Activated CD4-positive, alpha-beta T cell treated with anti-CD3 and anti-CD28 coated beads for 36 hours (primary cell): ENCODE measurements at regions of chr2 and their contacts with region 1.

Region 1: GRCh38 chr2:207166039-207166348 is 246 bp upstream of the KLF7 start:
- DNase-seq: peak; percentile 98
- ATAC-seq: peak; percentile 91
- H3K4me3 Mint-ChIP-seq: peak overlapping the region; percentile 90
- H3K27ac Mint-ChIP-seq: peak overlapping the region; percentile 95
- H3K4me1 Mint-ChIP-seq: peaks cover 44% of the 10 kb centered on the region
- H3K27me3 Mint-ChIP-seq: no peaks in the 10 kb centered on the region

Region 2: DNA sequence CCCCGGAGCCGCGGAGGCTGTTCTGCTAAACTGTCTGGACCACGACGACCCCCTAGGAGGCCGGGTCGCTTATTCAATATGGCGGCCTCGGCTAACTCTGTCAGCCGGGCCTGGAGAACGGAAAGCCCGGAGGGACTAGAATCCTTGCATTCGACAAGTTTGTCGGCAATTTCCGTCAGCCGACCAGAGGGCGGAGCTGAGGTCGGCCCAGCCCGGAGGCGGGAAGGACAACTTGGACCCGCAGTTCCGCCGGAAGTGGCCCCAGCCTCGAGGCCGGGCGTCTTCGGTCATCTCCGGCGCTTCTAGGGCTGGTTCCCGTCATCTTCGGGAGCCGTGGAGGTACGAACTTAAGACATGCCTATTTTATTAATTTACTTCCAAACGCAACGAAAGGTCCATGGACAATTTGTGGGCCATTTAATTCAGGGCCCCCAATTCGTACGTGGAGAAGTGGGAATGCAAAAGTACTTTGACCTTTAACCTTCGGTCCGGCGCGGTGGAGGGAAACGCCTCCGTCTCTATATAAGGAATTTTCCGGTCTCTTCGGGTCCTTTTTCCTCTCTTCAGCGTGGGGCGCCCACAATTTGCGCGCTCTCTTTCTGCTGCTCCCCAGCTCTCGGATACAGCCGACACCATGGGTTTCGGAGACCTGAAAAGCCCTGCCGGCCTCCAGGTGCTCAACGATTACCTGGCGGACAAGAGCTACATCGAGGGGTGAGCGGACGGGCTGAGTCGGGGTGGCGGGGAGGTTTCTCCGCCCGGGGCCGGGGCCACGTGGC is 1006.5 kb before region 1 on chr2 and contains the starts of genes EEF1B2 and NDUFS1:
- CTCF ChIA-PET with region 1: no interaction called
- POLR2A ChIA-PET with region 1: no interaction called
- intact Hi-C with region 1: loop called in 1 of 2 experiments (anchors 2 kb)
- DNase-seq: peak; percentile 99
- ATAC-seq: peak; percentile 95
- H3K4me3 Mint-ChIP-seq: peak within 1 kb of the TSS; percentile 97
- H3K27ac Mint-ChIP-seq: peak within 1 kb of the TSS; percentile 89
- H3K4me1 Mint-ChIP-seq: peaks cover 46% of the 10 kb centered on the region
- H3K27me3 Mint-ChIP-seq: no peaks in the 10 kb centered on the region
- total RNA-seq, gene EEF1B2: 983 to 1,166 TPM
- total RNA-seq, gene NDUFS1: 70.6 to 90.4 TPM

Region 3: GRCh38 chr2:206981739-206982340 is 184.2 kb before region 1 on chr2:
- CTCF ChIA-PET with region 1: interaction called, 3 read pairs
- POLR2A ChIA-PET with region 1: no interaction called
- intact Hi-C with region 1: loop called in 1 of 2 experiments (anchors 10 kb)
- DNase-seq: peak; percentile 76
- ATAC-seq: peak; percentile 80
- H3K4me3 Mint-ChIP-seq: no peak overlapping the region
- H3K27ac Mint-ChIP-seq: no peak overlapping the region
- H3K4me1 Mint-ChIP-seq: peaks cover 19% of the 10 kb centered on the region
- H3K27me3 Mint-ChIP-seq: no peaks in the 10 kb centered on the region

Region 4: GRCh38 chr2:207103132-207103531 is 62.9 kb before region 1 on chr2:
- CTCF ChIA-PET with region 1: no interaction called
- POLR2A ChIA-PET with region 1: no interaction called
- intact Hi-C with region 1: no loop called
- DNase-seq: no peak
- ATAC-seq: no peak
- H3K4me3 Mint-ChIP-seq: no peak overlapping the region
- H3K27ac Mint-ChIP-seq: no peak overlapping the region
- H3K4me1 Mint-ChIP-seq: peaks cover 12% of the 10 kb centered on the region
- H3K27me3 Mint-ChIP-seq: no peaks in the 10 kb centered on the region

Region 5: DNA sequence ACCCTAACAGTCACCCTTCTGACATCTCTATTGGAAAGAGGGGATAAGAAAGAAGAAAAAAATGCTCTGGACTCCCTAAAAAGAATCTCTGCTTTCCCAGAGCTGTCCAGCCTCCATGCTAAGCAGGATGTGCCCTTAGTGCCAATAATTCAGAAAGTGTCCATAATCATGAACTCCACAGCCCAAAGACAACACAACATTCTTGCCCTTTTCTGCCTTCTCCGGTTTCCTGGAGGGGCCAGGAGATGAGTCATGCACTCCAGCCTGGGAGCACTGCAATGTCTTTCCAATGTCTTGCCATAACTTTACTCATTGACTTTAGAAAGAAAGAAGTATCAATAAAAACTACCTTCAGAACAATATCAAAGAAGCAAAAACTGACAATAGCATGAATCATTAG is 44.2 kb before region 1 on chr2:
- CTCF ChIA-PET with region 1: no interaction called
- POLR2A ChIA-PET with region 1: interaction called, 14 read pairs
- intact Hi-C with region 1: loop called (anchors 1 kb)
- DNase-seq: no peak
- ATAC-seq: no peak
- H3K4me3 Mint-ChIP-seq: no peak overlapping the region
- H3K27ac Mint-ChIP-seq: peak overlapping the region; percentile 26
- H3K4me1 Mint-ChIP-seq: peaks cover 60% of the 10 kb centered on the region
- H3K27me3 Mint-ChIP-seq: no peaks in the 10 kb centered on the region

Region 6: DNA sequence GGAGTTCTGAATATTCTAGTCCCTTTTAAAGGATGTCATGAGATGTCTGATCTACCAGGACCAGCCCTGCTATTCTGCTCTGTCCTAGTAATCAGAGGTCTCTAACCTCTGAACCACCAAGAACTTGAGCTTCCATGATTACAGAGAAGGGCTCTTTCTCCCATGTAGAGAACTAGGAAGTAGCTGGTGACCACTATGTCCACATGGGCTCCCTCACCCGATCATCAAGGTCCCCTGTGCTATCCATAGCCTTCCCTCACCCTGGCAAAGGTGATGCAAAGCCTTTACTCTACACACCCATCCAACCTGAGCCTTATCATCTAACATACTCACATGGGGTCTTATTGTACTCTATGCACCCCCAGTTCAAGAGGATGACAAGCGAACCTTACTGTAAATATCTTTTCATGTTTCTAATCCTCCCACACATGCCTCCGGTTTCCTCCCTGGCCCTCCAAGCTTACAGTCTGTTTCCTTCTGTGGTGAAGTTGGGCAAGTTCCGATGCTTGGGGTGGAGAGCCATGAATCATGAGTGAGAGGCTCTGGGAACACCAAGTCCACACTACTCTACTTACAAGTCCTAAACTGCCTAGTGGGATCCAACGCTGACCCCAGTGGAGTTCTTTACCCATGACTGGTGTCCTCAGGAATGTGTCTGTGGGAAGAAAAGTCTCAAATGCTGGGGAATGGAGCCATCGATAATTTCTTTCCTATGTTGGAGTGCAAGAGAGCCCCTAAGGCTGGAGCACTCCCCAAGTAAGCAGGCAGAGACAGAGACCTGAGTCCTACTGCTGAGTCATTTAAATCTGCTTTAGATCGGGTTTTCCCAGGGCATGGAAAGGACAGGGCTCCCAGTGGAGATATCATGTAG is 73.1 kb after region 1 on chr2:
- CTCF ChIA-PET with region 1: interaction called, 6 read pairs
- POLR2A ChIA-PET with region 1: interaction called, 15 read pairs
- intact Hi-C with region 1: loop called in 1 of 2 experiments (anchors 1 kb)
- DNase-seq: peak; percentile 70
- ATAC-seq: peak; percentile 28
- H3K4me3 Mint-ChIP-seq: no peak overlapping the region
- H3K27ac Mint-ChIP-seq: peak overlapping the region; percentile 80
- H3K4me1 Mint-ChIP-seq: peaks cover 19% of the 10 kb centered on the region
- H3K27me3 Mint-ChIP-seq: no peaks in the 10 kb centered on the region

Region 7: GRCh38 chr2:207334624-207335371 is 168.8 kb after region 1 on chr2:
- CTCF ChIA-PET with region 1: no interaction called
- POLR2A ChIA-PET with region 1: interaction called, 3 read pairs
- intact Hi-C with region 1: loop called (anchors 1 to 2 kb)
- DNase-seq: peak; percentile 69
- ATAC-seq: peak; percentile 20
- H3K4me3 Mint-ChIP-seq: peak overlapping the region; percentile 48
- H3K27ac Mint-ChIP-seq: peak overlapping the region; percentile 94
- H3K4me1 Mint-ChIP-seq: peaks cover 78% of the 10 kb centered on the region
- H3K27me3 Mint-ChIP-seq: no peaks in the 10 kb centered on the region

Region 8: DNA sequence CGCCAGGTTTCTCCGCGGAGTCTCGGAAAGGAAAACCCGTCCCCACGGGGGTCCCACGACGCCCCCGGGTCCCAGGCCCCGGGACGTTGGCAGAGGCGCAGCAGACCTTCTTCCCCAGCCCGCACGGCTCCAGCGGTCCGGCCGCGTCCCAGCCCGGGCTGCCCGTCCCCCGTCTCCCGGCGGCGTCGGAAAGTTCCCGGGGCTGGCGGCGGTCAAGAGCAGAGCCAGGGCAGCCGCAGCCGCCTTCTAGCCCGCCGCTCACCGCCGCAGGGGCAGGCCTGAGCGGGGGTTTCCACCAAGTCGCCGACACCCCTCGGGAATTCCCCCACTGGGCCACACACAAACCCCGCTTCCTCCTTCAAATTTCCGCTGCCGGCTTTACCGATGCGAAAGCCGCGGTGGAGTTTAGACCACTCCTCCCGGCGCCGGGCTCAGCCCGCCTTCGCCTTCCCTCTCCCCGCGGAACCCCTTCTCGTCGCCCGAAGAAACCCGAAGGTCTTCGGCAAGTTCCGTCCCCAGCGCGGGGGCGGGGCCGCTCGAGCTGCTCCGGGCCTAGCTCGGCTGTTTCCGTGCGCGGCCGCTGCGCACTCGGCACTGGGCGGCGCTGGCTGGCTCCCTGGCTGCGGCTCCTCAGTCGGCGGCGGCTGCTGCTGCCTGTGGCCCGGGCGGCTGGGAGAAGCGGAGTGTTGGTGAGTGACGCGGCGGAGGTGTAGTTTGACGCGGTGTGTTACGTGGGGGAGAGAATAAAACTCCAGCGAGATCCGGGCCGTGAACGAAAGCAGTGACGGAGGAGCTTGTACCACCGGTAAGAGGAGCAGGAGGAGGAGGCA is 363.6 kb after region 1 on chr2 and contains the start of gene CREB1:
- CTCF ChIA-PET with region 1: no interaction called
- POLR2A ChIA-PET with region 1: interaction called, 3 read pairs
- intact Hi-C with region 1: loop called (anchors 1 kb)
- DNase-seq: peak; percentile 100
- ATAC-seq: peak; percentile 89
- H3K4me3 Mint-ChIP-seq: peak within 1 kb of the TSS; percentile 98
- H3K27ac Mint-ChIP-seq: peak within 1 kb of the TSS; percentile 100
- H3K4me1 Mint-ChIP-seq: peaks cover 57% of the 10 kb centered on the region
- H3K27me3 Mint-ChIP-seq: no peaks in the 10 kb centered on the region
- total RNA-seq, gene CREB1: 85.4 to 136 TPM